AG04450 (cell line): ENCODE measurements at regions of chr13 and their contacts with region 1.

Region 1: GRCh38 chr13:49976314-49977258 is 20.3 kb upstream of the TRIM13 start:
- DNase-seq: peak; percentile 34
- H3K4me3 ChIP-seq: no peak overlapping the region
- H3K27ac ChIP-seq: no peak overlapping the region
- H3K27me3 ChIP-seq: no peaks in the 10 kb centered on the region
- CTCF ChIP-seq: peak; percentile 92

Region 2: DNA sequence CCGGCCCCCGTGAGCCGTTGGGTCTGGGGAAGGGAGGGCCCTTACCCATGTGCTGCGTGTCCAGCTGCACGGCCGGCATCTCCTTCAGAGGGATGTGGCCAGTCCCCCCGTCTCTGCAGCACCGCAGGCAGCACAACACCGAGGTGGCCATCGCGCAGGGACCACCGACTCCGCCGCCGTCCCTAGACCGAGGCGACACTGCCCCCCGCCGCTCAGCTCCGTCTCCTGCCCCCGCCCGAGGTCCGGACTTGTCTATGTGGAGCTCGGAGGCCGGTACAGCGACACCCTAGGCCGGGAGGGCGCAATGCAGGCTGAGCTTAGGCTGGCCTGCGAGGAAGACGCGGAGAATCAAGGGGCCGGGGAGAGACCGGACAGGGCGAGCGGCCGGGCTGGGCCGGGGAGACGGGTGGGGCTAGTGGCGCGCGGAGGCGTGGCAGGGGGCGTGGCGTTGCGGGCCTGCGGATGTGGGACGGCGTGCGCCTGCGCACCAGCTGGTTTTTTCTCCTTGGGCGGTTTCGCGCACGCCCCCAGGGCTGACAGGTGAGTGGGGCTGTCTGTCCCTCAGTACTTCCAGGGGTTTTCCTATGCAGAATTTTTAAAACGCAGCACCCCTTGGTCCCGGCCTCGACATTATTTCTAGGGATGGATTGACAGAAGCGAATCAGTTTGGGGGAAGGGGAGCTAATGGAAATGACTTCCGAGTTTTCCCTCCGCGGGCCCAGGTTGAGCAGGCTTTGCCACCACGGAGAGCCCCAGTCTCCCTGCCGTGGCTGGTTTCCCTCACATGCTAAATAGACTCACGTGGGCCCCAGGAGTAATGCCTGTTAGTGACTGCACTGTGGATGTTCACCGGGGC is 40.3 kb before region 1 on chr13 and contains the start of gene SPRYD7:
- CTCF ChIA-PET with region 1: interaction called, 15 read pairs
- POLR2A ChIA-PET with region 1: interaction called, 3 read pairs
- DNase-seq: peak; percentile 95
- H3K4me3 ChIP-seq: peak within 1 kb of the TSS; percentile 93
- H3K27ac ChIP-seq: peak within 1 kb of the TSS; percentile 68
- H3K27me3 ChIP-seq: no peaks in the 10 kb centered on the region
- CTCF ChIP-seq: peak; percentile 85
- polyA plus RNA-seq, gene SPRYD7: 6.4 and 8.0 TPM in 2 replicates

Region 3: GRCh38 chr13:50030315-50030714 is 53.7 kb after region 1 on chr13:
- CTCF ChIA-PET with region 1: no interaction called
- POLR2A ChIA-PET with region 1: no interaction called
- DNase-seq: no peak
- H3K4me3 ChIP-seq: no peak overlapping the region
- H3K27ac ChIP-seq: no peak overlapping the region
- H3K27me3 ChIP-seq: no peaks in the 10 kb centered on the region
- CTCF ChIP-seq: no peak

Region 4: GRCh38 chr13:50801087-50801931 is 824.7 kb after region 1 on chr13:
- CTCF ChIA-PET with region 1: interaction called, 21 read pairs
- POLR2A ChIA-PET with region 1: no interaction called
- DNase-seq: peak; percentile 37
- H3K4me3 ChIP-seq: no peak overlapping the region
- H3K27ac ChIP-seq: no peak overlapping the region
- H3K27me3 ChIP-seq: no peaks in the 10 kb centered on the region
- CTCF ChIP-seq: peak; percentile 85

Region 5: DNA sequence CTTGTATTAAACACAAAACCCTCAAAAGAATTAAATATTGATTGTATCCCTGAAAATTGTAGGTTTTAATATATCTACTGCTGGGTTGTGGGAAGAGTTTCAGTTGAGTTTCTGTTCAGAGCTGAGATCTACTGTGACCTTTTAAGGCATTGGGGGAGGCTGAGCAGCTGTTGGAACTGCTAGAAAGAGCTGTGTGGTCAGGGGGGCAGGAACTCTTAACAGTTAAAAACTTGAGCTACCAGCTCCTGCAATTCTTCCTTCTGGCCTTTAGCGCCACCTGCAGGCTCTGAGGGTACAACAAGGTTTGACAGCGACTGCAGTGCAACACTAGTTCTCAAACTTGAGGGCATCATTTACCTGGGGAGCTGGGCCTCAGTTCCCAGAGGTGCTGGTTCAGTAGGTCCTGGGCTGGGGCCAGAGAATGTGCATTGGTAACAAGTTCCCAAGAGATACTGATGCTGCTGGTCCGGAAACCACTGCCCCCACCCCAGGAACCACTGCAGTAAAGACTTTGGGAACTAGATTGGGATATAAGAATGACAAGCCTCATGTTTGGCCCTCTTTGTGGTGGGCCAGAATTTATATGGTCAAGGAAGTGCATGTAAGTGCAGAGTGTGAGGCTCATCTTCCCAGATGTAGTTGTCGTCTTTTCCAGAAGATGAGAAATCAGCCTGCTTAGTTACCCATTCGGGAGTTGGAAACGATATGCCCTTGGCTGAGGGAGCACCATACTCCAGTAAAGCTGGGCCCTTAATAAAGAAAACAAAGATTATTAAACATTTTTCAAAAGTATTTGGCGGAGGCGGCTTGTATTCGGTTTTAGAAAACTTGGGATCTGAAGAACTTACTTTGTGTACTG is 935.6 kb after region 1 on chr13:
- CTCF ChIA-PET with region 1: interaction called, 11 read pairs
- POLR2A ChIA-PET with region 1: no interaction called
- DNase-seq: peak; percentile 79
- H3K4me3 ChIP-seq: no peak overlapping the region
- H3K27ac ChIP-seq: no peak overlapping the region
- H3K27me3 ChIP-seq: no peaks in the 10 kb centered on the region
- CTCF ChIP-seq: peak; percentile 82

Region 6: DNA sequence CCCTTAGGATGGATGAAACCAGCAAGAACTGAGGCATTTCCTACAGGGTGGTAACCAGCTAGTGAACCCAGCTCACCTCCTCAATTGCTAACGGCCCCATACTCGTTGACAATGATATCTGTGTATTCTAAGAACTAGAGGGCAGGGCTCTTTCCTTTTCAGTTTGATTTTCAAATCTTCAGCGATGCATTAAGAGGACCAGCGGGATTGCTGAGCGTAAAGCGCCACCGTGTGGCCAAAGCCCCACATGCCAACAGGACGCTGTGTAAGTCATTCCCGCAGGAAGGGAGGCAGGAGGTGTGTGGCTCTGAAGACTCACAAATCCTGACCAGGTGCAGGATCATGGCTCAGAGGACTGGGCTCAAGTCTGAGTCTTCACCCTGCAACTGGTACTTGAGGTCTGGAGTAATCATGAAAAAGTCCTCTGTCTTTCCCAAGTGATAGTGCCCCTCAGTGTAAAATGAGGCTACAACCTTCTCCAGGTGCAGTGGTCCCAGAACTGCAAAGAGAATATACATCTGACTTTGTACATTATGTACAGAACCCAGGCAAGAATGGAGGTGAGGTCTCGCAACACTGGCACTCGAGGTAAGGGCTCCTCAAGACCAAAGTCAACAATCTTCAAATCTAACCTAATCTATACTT is 1093.5 kb after region 1 on chr13:
- CTCF ChIA-PET with region 1: interaction called, 12 read pairs
- POLR2A ChIA-PET with region 1: no interaction called
- DNase-seq: peak; percentile 45
- H3K4me3 ChIP-seq: no peak overlapping the region
- H3K27ac ChIP-seq: no peak overlapping the region
- H3K27me3 ChIP-seq: peaks cover 13% of the 10 kb centered on the region
- CTCF ChIP-seq: peak; percentile 97